ENCODE measurements at regions of chr21 and their contacts with region 1.

Region 1: DNA sequence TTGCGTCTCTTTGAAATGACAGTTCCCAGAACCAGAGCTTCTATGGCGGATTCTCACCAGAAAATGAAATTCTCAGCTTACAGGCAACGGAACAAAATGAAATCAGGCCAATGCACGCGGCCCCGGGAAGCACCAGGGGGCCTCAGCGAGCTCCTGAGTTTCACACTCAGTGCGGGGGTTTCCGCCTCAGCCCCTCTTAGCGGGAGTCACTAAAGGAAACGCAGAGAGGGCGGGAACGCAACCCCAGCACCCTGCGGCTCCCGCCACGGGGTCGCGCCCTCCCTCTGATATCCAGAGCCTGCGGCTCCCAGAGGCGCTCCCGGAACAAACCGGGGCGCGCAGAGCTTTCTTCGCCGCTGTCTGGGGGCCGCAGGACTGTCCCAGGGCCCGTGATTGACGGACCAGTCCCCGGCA is 7.9 kb upstream of the COL6A1 start:
- DNase-seq: peak; percentile 93
- H3K4me3 Mint-ChIP-seq: peak overlapping the region; percentile 70
- H3K27ac Mint-ChIP-seq: peak overlapping the region; percentile 66
- H3K4me1 Mint-ChIP-seq: peaks cover 20% of the 10 kb centered on the region
- H3K27me3 Mint-ChIP-seq: peaks cover 16% of the 10 kb centered on the region

Region 2: DNA sequence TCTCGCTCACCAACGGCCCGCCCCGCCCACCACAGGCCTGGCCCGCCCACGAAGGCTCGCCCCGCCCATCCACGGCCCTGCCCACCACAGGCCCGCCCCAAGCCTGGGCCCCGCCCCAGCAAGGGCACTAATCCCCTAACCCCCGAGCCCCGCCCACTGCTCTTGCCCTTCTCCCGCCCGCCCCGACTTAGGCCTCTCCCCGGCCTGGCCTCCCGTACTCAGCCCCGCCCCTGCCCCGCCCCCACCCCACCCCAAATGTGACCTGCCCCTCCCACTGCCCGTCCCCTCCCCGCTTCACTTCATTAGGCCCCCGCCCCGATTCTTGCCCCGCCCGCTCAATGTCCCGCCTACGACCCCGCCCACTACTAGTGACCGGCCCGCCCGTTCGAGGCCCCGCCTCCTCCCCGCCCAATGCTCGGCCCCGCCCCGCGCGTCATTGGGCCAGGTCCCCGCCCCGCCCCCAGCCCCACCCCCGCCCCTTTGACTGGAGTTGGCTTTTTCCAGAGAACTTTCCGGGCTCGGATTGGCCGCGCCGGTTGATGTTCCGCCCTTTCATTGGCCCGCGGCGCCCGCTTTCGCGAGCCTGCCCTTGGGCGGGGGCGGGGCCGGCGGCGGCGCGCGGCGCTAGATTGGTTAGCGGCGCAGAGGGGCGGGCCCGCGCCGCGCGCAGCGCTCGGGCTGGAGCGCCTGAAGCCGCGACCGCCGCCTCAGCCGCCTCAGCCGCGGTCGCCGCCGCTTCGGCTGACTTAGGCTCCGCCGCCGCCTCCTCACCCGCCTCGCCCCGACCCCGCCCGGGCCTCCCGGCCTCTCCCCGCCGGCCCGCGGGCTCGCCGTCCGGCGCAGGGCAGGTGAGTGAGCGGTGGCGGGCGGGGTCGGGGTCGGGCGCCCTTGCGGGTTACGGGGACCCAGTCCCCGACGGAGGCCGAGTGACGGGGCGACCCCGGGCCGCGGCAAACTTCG is 330.4 kb before region 1 on chr21 and contains the start of gene PCBP3:
- CTCF ChIA-PET with region 1: interaction called, 3 read pairs
- intact Hi-C with region 1: loop called (anchors 5 kb)
- DNase-seq: peak; percentile 99
- H3K4me3 Mint-ChIP-seq: peak within 1 kb of the TSS; percentile 76
- H3K27ac Mint-ChIP-seq: no peak within 1 kb of the TSS
- H3K4me1 Mint-ChIP-seq: peaks cover 46% of the 10 kb centered on the region
- H3K27me3 Mint-ChIP-seq: peaks cover 5% of the 10 kb centered on the region
- total RNA-seq, gene PCBP3: 10.0 to 10.2 TPM

Region 3: DNA sequence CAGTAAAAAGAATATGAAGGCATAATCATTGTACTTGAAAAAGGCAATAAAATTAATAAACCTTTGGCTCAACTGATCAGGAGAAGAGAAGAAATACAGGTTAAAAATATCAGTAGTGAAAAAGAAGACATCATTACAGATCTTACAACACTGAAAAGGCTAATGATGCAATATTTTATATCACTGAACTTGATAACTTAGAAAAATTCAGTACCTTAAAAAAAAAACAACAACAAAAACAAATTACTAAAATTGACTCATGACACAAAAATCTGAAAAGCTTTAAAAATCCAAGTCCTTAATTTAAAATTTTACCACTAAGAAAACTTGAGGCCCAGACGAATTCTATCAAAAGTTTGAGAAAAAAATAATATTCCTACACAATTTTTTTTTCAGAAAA is 285.0 kb before region 1 on chr21:
- CTCF ChIA-PET with region 1: no interaction called
- intact Hi-C with region 1: no loop called
- DNase-seq: no peak
- H3K4me3 Mint-ChIP-seq: no peak overlapping the region
- H3K27ac Mint-ChIP-seq: no peak overlapping the region
- H3K4me1 Mint-ChIP-seq: no peaks in the 10 kb centered on the region
- H3K27me3 Mint-ChIP-seq: no peaks in the 10 kb centered on the region

Region 4: DNA sequence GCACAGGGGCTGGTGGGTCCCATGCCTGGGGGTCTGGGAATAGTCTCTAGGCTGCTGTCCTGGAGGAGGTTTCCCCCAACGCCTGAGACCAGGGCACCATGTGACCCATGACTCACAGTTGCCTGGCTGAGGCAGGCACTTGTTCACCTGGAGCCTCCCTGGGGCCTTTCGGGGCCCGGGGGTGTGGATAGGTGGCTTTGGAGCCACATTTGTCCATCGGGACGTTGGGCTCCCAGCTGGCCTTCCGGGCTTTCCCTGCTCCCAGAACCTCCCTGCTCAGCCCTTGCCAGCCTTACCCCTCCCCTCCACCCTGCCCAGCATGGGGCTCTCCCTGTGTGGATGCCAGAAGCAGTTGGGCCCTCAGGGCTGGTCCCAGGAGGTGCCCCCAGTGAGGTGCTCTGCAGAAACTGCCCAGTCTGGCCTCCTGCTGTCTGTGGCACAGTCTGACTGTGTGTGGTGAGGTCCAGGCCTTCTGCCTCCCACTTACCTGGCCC is 22.1 kb after region 1 on chr21:
- CTCF ChIA-PET with region 1: no interaction called
- intact Hi-C with region 1: no loop called
- DNase-seq: no peak
- H3K4me3 Mint-ChIP-seq: no peak overlapping the region
- H3K27ac Mint-ChIP-seq: no peak overlapping the region
- H3K4me1 Mint-ChIP-seq: no peaks in the 10 kb centered on the region
- H3K27me3 Mint-ChIP-seq: no peaks in the 10 kb centered on the region

Region 5: DNA sequence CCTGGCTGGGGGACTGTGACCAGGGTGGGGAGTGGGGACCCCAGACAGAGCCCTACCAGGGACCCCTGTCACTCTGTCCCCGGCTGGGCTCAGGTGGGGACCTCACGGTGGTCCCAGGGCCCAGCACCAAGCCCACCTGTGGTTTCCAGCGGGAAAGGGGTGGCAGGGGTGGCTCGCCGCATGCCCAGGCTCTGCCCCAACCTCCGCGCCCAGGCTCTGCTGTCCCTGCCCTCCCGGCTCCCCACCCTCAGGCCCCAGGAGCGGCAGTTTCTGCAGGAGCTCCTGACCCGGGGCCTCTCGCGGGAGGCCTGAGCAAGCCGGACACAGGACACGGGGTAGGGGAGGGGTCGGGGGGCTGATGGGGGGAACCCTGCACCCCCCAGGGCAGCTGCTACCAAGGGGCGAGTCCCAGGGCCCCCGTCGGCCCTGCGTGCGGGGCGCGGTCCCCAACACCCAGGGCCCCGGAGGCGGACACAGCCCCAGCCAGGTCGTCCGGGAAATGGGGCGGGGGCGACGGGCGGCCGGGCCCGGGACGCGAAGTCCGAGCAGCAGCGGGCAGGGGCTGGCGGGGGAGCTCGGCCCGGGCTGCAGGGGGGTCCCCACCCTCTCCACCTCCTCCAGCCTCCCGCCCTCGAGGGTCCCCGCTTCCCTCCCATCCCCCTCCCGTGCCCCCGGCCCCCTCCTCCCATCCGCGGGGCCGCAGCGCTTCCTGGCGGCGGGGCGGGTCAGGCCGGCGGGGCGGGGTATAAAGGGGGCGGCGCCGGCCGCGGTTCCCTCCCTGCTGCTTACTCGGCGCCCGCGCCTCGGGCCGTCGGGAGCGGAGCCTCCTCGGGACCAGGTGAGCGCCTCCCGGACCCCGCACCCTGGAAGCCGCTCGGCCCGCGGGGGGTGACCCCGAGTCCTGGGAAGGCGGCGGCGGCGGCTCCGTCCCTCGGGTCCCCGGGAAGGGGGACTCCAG is 123.9 kb after region 1 on chr21 and contains the start of gene COL6A2:
- CTCF ChIA-PET with region 1: interaction called, 4 read pairs
- intact Hi-C with region 1: loop called (anchors 1 kb)
- DNase-seq: peak; percentile 63
- H3K4me3 Mint-ChIP-seq: peak within 1 kb of the TSS; percentile 58
- H3K27ac Mint-ChIP-seq: no peak within 1 kb of the TSS
- H3K4me1 Mint-ChIP-seq: no peaks in the 10 kb centered on the region
- H3K27me3 Mint-ChIP-seq: peaks cover 19% of the 10 kb centered on the region
- total RNA-seq, gene COL6A2: 6.7 to 8.4 TPM

Region 6: GRCh38 chr21:46221664-46222435 is 248.2 kb after region 1 on chr21:
- CTCF ChIA-PET with region 1: no interaction called
- intact Hi-C with region 1: loop called (anchors 2 kb)
- DNase-seq: no peak
- H3K4me3 Mint-ChIP-seq: no peak overlapping the region
- H3K27ac Mint-ChIP-seq: no peak overlapping the region
- H3K4me1 Mint-ChIP-seq: peaks cover 7% of the 10 kb centered on the region
- H3K27me3 Mint-ChIP-seq: no peaks in the 10 kb centered on the region

Region 7: GRCh38 chr21:46285761-46286496 is 312.3 kb after region 1 on chr21 and contains the start of gene YBEY:
- CTCF ChIA-PET with region 1: no interaction called
- intact Hi-C with region 1: loop called (anchors 5 kb)
- DNase-seq: peak; percentile 89
- H3K4me3 Mint-ChIP-seq: peak within 1 kb of the TSS; percentile 98
- H3K27ac Mint-ChIP-seq: peak within 1 kb of the TSS; percentile 96
- H3K4me1 Mint-ChIP-seq: peaks cover 59% of the 10 kb centered on the region
- H3K27me3 Mint-ChIP-seq: no peaks in the 10 kb centered on the region
- total RNA-seq, gene YBEY: 9.9 to 11.0 TPM

Region 8: GRCh38 chr21:46458315-46459023 is 484.8 kb after region 1 on chr21 and contains the start of gene DIP2A:
- CTCF ChIA-PET with region 1: no interaction called
- intact Hi-C with region 1: loop called (anchors 5 kb)
- DNase-seq: peak; percentile 94
- H3K4me3 Mint-ChIP-seq: peak within 1 kb of the TSS; percentile 83
- H3K27ac Mint-ChIP-seq: peak within 1 kb of the TSS; percentile 86
- H3K4me1 Mint-ChIP-seq: peaks cover 36% of the 10 kb centered on the region
- H3K27me3 Mint-ChIP-seq: no peaks in the 10 kb centered on the region
- total RNA-seq, gene DIP2A: 31.4 to 32.7 TPM

Region 9: DNA sequence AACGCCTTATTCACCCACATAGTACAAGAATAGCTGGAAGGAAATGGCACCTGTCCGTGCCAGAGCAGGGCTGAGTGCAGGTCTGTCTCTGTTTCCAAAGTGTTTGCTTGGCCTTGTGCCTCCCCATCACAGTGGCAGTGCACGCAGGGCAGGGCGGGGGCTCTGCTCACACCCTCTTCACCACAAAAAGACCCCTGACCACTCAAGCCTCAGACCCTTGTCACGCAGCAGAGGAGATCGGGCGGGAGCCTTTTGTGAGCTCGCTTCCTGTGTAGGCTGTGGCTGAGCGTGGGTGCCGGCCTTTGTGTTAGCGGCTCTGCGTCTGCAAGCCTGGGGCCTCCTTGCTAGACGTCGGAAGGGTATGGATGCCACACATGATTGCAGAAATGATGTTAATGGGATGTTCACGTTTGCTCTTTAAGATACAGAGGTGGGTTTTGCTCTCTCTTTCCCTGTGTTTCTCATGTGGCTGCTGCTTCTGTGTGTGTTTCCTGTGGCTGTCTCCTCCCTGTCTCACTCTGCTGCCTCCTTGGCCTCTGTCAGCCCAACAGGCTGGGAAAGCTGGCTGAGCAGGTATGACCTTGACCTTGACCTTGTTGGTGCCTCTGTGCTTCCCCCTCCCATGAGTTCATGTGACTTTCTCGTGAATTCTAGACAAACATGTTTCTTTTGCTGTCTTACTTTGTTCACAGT is 585.8 kb after region 1 on chr21:
- CTCF ChIA-PET with region 1: no interaction called
- intact Hi-C with region 1: loop called (anchors 5 kb)
- DNase-seq: peak; percentile 77
- H3K4me3 Mint-ChIP-seq: peak overlapping the region; percentile 85
- H3K27ac Mint-ChIP-seq: peak overlapping the region; percentile 98
- H3K4me1 Mint-ChIP-seq: peaks cover 59% of the 10 kb centered on the region
- H3K27me3 Mint-ChIP-seq: no peaks in the 10 kb centered on the region